Activated naive CD4-positive, alpha-beta T cell treated with anti-CD3 and anti-CD28 coated beads for 36 hours (primary cell): ENCODE measurements at regions of chr16 and their contacts with region 1.

Region 1: GRCh38 chr16:30922960-30923535 is 324 bp upstream of the FBXL19 start:
- DNase-seq: peak; percentile 99
- H3K4me3 Mint-ChIP-seq: peak overlapping the region; percentile 99
- H3K27ac Mint-ChIP-seq: peak overlapping the region; percentile 100
- H3K4me1 Mint-ChIP-seq: peaks cover 14% of the 10 kb centered on the region
- H3K27me3 Mint-ChIP-seq: no peaks in the 10 kb centered on the region

Region 2: GRCh38 chr16:30519120-30520049 is 403.7 kb before region 1 on chr16:
- CTCF ChIA-PET with region 1: no interaction called
- intact Hi-C with region 1: no loop called
- DNase-seq: no peak
- H3K4me3 Mint-ChIP-seq: no peak overlapping the region
- H3K27ac Mint-ChIP-seq: peak overlapping the region; percentile 13
- H3K4me1 Mint-ChIP-seq: no peaks in the 10 kb centered on the region
- H3K27me3 Mint-ChIP-seq: no peaks in the 10 kb centered on the region

Region 3: DNA sequence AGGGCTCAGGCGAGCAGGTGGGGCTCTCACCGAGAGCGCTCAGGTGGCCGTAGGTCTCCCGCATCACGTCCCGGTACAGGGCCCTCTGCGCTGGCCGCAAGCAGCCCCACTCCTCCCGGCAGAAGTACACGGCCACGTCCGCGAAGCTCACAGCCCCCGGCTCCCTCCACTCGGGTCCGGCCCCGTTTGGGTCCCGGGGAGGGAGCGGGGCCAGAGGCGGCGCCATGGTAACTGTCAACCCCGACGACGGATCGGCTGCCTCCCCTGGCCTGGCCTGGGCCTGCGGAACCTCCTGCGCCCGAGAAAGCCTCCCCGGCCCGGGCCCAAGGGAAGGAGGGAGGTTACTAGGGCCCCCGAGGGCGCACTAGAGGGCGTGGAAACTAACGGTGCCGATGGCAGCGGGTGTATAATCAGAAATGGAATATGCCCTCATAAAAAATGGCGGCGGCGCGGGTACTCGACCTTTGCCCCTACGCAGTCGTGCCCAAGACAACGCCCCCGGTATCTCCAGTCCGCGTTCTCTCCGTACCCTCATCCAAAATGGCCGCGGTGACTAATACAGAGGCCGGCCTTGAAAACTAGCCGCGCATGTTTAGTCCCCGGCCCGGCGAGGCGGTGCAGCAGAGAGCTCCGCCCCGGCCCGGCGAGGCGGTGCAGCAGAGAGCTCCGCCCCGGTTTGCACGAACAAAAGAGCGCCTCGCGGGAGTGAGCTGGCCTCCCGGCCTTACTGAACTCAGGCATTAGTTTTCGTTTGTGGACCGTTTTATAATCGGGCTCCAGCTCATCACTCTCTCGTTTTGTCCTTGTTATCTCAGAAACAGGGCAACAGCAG is 364.9 kb before region 1 on chr16 and contains the start of gene ZNF764:
- CTCF ChIA-PET with region 1: no interaction called
- intact Hi-C with region 1: loop called (anchors 10 kb)
- DNase-seq: peak; percentile 99
- H3K4me3 Mint-ChIP-seq: peak within 1 kb of the TSS; percentile 84
- H3K27ac Mint-ChIP-seq: peak within 1 kb of the TSS; percentile 90
- H3K4me1 Mint-ChIP-seq: peaks cover 34% of the 10 kb centered on the region
- H3K27me3 Mint-ChIP-seq: no peaks in the 10 kb centered on the region
- total RNA-seq, gene ZNF764: 7.6 to 9.5 TPM

Region 4: GRCh38 chr16:30761928-30762810 is 160.9 kb before region 1 on chr16 and contains the starts of genes CFAP119 and RNF40:
- CTCF ChIA-PET with region 1: no interaction called
- intact Hi-C with region 1: loop called (anchors 1 kb)
- DNase-seq: peak; percentile 95
- H3K4me3 Mint-ChIP-seq: peak within 1 kb of the TSS; percentile 94
- H3K27ac Mint-ChIP-seq: peak within 1 kb of the TSS; percentile 87
- H3K4me1 Mint-ChIP-seq: peaks cover 25% of the 10 kb centered on the region
- H3K27me3 Mint-ChIP-seq: no peaks in the 10 kb centered on the region
- total RNA-seq, gene CFAP119: 2.0 to 2.3 TPM
- total RNA-seq, gene RNF40: 51.1 to 61.0 TPM

Region 5: GRCh38 chr16:30874821-30875717 is 48.0 kb before region 1 on chr16:
- CTCF ChIA-PET with region 1: no interaction called
- intact Hi-C with region 1: loop called (anchors 1 kb)
- DNase-seq: peak; percentile 90
- H3K4me3 Mint-ChIP-seq: peak overlapping the region; percentile 92
- H3K27ac Mint-ChIP-seq: peak overlapping the region; percentile 96
- H3K4me1 Mint-ChIP-seq: peaks cover 40% of the 10 kb centered on the region
- H3K27me3 Mint-ChIP-seq: no peaks in the 10 kb centered on the region

Region 6: GRCh38 chr16:30957456-30958174 is 34.6 kb after region 1 on chr16 and contains the start of gene SETD1A:
- CTCF ChIA-PET with region 1: no interaction called
- intact Hi-C with region 1: loop called (anchors 1 kb)
- DNase-seq: peak; percentile 99
- H3K4me3 Mint-ChIP-seq: peak within 1 kb of the TSS; percentile 93
- H3K27ac Mint-ChIP-seq: peak within 1 kb of the TSS; percentile 99
- H3K4me1 Mint-ChIP-seq: peaks cover 27% of the 10 kb centered on the region
- H3K27me3 Mint-ChIP-seq: no peaks in the 10 kb centered on the region
- total RNA-seq, gene SETD1A: 14.3 to 14.6 TPM

Region 7: DNA sequence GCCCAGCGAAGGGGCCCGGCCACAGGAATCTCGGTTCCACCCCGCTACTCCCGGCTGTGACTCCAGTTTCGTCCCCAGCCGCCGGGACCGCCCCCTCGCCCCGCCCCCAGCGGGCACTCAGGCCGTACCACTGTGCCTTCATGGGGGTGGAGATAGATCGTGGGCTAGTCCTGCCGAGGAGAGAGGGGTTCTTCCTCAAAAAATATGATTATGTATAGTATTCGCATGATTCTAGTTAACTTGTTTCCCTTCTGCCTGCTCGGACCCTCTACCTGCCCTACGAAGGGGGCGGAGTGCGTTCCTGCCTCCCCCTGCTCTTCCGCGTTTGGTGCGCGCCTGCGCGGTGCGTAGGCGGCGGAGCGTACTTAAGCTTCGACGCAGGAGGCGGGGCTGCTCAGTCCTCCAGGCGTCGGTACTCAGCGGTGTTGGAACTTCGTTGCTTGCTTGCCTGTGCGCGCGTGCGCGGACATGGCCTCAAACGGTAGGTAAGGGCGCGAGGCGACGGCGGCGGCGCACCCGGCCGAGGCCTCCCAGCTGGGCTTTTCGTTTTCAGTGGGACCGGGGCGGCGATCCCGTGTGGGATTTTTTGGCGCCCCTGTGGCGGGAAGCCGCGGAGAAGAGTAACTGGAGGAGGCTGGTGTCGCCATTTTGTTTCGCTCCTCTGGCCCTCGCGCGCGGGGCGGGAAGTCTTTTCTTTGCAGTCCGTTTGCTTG is 256.9 kb after region 1 on chr16 and contains the start of gene FUS:
- CTCF ChIA-PET with region 1: no interaction called
- intact Hi-C with region 1: loop called (anchors 1 kb)
- DNase-seq: peak; percentile 92
- H3K4me3 Mint-ChIP-seq: peak within 1 kb of the TSS; percentile 99
- H3K27ac Mint-ChIP-seq: peak within 1 kb of the TSS; percentile 100
- H3K4me1 Mint-ChIP-seq: peaks cover 51% of the 10 kb centered on the region
- H3K27me3 Mint-ChIP-seq: no peaks in the 10 kb centered on the region
- total RNA-seq, gene FUS: 424 to 435 TPM